CD4-positive, alpha-beta T cell (primary cell): ENCODE measurements at regions of chr18 and their contacts with region 1.

Region 1: GRCh38 chr18:62186774-62187542 is at the starts of genes PIGN and RELCH:
- DNase-seq: peak; percentile 87 to 99 (median 91)
- ATAC-seq: peak; percentile 89
- H3K4me3 ChIP-seq: peak within 1 kb of the TSS; percentile 76
- H3K4me3 Mint-ChIP-seq: peak within 1 kb of the TSS; percentile 97
- H3K27ac ChIP-seq: peak within 1 kb of the TSS; percentile 66 to 78
- H3K27ac Mint-ChIP-seq: peak within 1 kb of the TSS; percentile 95
- H3K4me1 ChIP-seq: peaks cover 29% of the 10 kb centered on the region
- H3K4me1 Mint-ChIP-seq: peaks cover 72% of the 10 kb centered on the region
- H3K27me3 ChIP-seq: no peaks in the 10 kb centered on the region
- H3K27me3 Mint-ChIP-seq: no peaks in the 10 kb centered on the region
- CTCF ChIP-seq: no peak
- total RNA-seq, gene PIGN: 9.6 to 11.7 TPM
- total RNA-seq, gene RELCH: 39.6 to 44.3 TPM

Region 2: GRCh38 chr18:62201903-62202302 is 14.9 kb after region 1 on chr18:
- CTCF ChIA-PET with region 1: interaction called, 3 read pairs
- POLR2A ChIA-PET with region 1: interaction called, 9 read pairs
- intact Hi-C with region 1: loop called in 1 of 2 experiments (anchors 2 kb)
- DNase-seq: no peak
- ATAC-seq: no peak
- H3K4me3 ChIP-seq: no peak overlapping the region
- H3K4me3 Mint-ChIP-seq: no peak overlapping the region
- H3K27ac ChIP-seq: no peak overlapping the region
- H3K27ac Mint-ChIP-seq: no peak overlapping the region
- H3K4me1 ChIP-seq: no peaks in the 10 kb centered on the region
- H3K4me1 Mint-ChIP-seq: peaks cover 71% of the 10 kb centered on the region
- H3K27me3 ChIP-seq: no peaks in the 10 kb centered on the region
- H3K27me3 Mint-ChIP-seq: no peaks in the 10 kb centered on the region
- CTCF ChIP-seq: no peak

Region 3: GRCh38 chr18:62425465-62426195 is 238.7 kb after region 1 on chr18:
- CTCF ChIA-PET with region 1: no interaction called
- POLR2A ChIA-PET with region 1: interaction called, 13 read pairs
- intact Hi-C with region 1: no loop called
- DNase-seq: peak in 13 of 14 experiments; percentile 5 to 85 (median 31)
- ATAC-seq: peak; percentile 51
- H3K4me3 ChIP-seq: no peak overlapping the region
- H3K4me3 Mint-ChIP-seq: no peak overlapping the region
- H3K27ac ChIP-seq: no peak overlapping the region
- H3K27ac Mint-ChIP-seq: no peak overlapping the region
- H3K4me1 ChIP-seq: peaks cover 12% of the 10 kb centered on the region
- H3K4me1 Mint-ChIP-seq: peaks cover 18% of the 10 kb centered on the region
- H3K27me3 ChIP-seq: no peaks in the 10 kb centered on the region
- H3K27me3 Mint-ChIP-seq: no peaks in the 10 kb centered on the region
- CTCF ChIP-seq: peak; percentile 83

Region 4: DNA sequence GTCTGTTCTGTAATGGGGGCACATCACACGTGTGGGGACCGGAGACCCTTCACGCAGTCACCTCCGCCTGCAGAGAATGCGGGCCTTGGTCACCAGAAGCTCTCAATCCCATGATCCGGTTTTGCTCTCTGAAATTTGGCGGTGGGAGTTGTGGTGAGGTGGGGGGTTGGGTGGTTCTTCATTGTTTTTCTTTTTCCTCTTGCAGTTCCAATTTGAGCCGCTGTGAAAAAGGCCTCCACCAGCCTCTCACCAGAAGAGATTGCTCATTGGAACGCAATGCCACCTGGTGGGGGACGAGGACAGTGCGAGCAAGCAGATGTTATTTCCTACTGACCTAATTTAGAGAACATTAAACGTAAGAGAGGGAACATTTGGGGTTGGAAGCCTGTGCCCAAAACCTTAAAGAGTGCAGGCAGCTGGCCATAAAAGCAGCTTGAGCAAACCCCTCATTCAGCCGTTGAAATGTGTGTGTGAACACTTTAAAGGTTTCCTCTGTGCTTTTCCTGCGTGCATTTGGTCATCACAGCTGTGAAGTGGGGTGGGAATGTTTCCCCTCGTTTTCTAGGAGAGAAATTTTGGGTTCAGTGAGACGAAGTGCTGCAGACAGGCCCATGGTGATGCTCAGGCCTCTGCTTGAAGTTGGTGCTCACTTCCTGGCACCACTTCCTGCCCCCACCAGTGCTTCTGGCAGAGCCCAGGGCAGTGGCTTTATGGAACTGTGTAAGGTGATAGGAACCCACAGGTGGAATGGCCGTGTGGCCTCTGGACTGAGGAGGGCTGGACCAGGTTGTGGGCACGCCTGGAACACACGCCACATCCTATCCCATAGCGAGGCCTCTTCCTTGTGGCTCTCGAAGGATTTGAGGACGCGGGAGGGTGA is 397.5 kb after region 1 on chr18:
- CTCF ChIA-PET with region 1: no interaction called
- POLR2A ChIA-PET with region 1: no interaction called
- intact Hi-C with region 1: loop called (anchors 2 kb)
- DNase-seq: peak; percentile 69 to 92 (median 78)
- ATAC-seq: peak; percentile 97
- H3K4me3 ChIP-seq: no peak overlapping the region
- H3K4me3 Mint-ChIP-seq: peak overlapping the region; percentile 16
- H3K27ac ChIP-seq: no peak overlapping the region
- H3K27ac Mint-ChIP-seq: peak overlapping the region; percentile 32
- H3K4me1 ChIP-seq: peaks cover 28% of the 10 kb centered on the region
- H3K4me1 Mint-ChIP-seq: peaks cover 33% of the 10 kb centered on the region
- H3K27me3 ChIP-seq: no peaks in the 10 kb centered on the region
- H3K27me3 Mint-ChIP-seq: no peaks in the 10 kb centered on the region
- CTCF ChIP-seq: peak; percentile 98

Region 5: DNA sequence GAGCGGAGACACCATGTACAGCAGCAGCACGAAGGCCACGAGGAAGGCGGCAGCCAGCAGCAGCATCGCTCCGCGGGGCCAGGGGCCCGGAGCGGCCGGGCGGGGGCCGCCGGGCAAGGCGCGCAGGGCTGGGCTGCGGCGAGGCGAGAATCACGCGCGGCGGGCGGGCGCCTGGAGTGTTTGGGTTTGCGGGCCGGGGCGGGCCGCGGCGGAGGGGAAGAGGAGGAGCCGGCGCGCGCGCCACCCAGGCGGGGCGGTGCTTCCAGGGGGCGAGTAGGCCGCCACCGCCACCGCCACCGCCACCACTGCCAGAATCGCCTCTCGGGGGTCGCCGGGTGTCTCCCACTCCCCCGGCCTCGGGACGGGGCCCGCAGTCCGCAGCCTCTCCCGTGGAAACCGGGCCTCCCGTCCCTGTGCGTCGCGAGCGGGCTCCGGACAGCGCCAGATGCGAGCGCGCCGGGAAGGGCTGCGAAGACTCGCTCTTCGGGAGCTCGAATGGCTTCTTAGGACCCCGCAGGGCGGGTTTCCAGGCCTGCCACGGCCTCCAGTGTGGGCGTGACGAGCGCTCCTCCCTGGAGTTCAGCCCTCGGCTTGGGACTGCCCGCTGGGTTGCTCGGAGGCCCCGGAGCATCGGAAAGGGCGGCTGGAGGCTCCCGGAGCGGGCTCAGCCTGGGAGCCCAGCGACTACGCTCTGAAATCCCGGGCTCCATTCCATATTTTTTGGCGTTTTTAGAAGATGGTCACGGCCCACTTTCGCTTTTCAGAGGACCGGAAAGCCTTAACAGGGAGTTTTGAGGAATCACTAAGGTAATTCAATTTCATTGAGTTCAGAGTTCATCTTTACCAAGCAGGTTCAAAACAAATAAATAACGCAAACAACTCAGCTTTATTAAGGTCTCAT is 1180.3 kb after region 1 on chr18 and contains the start of gene KDSR:
- CTCF ChIA-PET with region 1: no interaction called
- POLR2A ChIA-PET with region 1: interaction called, 3 read pairs
- intact Hi-C with region 1: loop called in 1 of 2 experiments (anchors 5 kb)
- DNase-seq: peak; percentile 63 to 91 (median 77)
- ATAC-seq: peak; percentile 80
- H3K4me3 ChIP-seq: peak within 1 kb of the TSS; percentile 94
- H3K4me3 Mint-ChIP-seq: peak within 1 kb of the TSS; percentile 94
- H3K27ac ChIP-seq: peak within 1 kb of the TSS; percentile 65 to 72
- H3K27ac Mint-ChIP-seq: peak within 1 kb of the TSS; percentile 91
- H3K4me1 ChIP-seq: peaks cover 33% of the 10 kb centered on the region
- H3K4me1 Mint-ChIP-seq: peaks cover 56% of the 10 kb centered on the region
- H3K27me3 ChIP-seq: no peaks in the 10 kb centered on the region
- H3K27me3 Mint-ChIP-seq: no peaks in the 10 kb centered on the region
- CTCF ChIP-seq: no peak
- total RNA-seq, gene KDSR: 21.1 to 23.5 TPM

Region 6: GRCh38 chr18:63969960-63970802 is 1783.2 kb after region 1 on chr18 and contains the start of gene SERPINB8:
- CTCF ChIA-PET with region 1: no interaction called
- POLR2A ChIA-PET with region 1: no interaction called
- intact Hi-C with region 1: loop called in 1 of 2 experiments (anchors 10 kb)
- DNase-seq: peak; percentile 65 to 89 (median 76)
- ATAC-seq: peak; percentile 90
- H3K4me3 ChIP-seq: peak within 1 kb of the TSS; percentile 77
- H3K4me3 Mint-ChIP-seq: peak within 1 kb of the TSS; percentile 99
- H3K27ac ChIP-seq: peak within 1 kb of the TSS; percentile 84 to 93
- H3K27ac Mint-ChIP-seq: peak within 1 kb of the TSS; percentile 99
- H3K4me1 ChIP-seq: peaks cover 21% of the 10 kb centered on the region
- H3K4me1 Mint-ChIP-seq: peaks cover 27% of the 10 kb centered on the region
- H3K27me3 ChIP-seq: no peaks in the 10 kb centered on the region
- H3K27me3 Mint-ChIP-seq: peaks cover 4% of the 10 kb centered on the region
- CTCF ChIP-seq: peak; percentile 2
- total RNA-seq, gene SERPINB8: 9.8 to 11.0 TPM